AG04449 (cell line): ENCODE measurements at regions of chr17 and their contacts with region 1.

Region 1: DNA sequence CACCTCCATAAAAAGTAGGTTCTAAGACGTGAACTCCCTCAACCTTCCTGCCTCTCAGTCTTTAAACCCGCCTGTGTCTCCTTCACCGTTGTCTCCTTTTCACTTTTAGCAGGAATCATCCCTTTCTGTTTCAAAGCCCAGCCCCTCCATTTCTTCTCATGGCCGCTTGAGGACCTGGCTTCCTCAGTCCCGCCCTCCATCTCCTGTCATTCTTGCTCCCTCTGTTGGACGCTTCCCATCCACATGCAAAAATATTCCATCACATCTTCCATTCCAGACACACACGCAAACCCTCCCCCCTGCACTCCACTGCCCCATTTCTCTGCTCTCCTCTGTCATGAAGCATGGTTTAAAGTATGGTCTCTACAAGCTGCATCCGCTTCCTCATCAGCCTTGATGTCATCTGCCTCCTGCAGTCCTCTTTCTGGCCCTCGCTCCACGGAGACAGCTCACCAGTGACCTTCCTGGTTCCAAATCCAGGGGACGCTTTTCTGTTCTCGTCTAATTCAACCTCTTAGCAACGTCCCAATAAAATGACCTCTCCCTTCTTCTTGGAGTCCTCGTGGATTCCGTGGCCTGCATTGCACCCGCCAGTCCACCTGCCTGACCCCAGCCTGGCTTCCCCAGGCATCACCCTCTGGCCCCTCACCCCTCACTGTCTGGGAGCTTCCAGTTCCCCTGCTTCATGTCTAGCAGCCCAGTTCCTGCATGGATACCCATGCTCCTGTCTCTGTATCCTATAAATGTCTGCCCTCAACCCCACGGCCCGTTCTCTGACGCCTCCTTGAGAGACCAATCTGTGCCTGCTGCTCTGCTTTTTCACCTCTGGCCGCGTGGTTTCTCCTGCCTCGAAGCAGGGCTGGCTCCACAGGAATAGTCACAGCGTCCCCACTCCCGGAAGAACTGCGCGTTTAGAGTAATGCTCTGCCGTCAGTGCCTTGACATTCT is 26.2 kb downstream of the ANKRD40 start:
- DNase-seq: no peak
- H3K4me3 ChIP-seq: no peak overlapping the region
- CTCF ChIP-seq: peak; percentile 80

Region 2: DNA sequence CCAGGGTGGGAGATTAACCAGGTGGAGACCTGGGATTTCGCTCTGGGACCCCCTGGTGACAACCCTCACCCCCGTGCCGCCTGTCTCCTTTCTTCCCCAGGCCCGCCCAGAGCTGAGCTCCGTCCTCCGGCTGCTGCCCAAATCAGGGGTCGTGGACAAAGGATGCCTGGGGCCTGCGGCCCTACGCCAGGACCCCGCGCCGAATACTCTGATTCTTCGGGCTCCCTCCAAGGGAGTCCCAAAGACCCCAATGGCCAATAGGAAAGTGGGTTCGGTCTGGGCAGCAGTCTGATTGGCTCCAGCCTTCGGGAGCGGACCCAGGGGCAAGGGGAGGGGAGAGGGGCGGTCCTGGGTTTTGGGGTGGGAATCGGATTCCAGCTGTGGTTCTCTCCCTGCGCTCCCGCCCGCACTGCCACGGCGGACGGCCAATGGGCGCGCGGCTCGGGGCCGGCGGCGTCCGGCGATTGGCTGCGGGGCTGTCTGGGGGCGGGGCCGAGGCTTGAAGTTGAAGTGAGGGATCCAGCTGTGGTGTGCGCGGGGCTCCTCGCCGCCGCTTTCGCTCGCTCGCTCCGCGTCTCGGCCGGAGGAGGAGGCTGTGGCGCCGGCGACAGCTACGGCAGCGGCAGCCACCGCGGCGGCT is 121.2 kb before region 1 on chr17 and contains the start of gene CACNA1G:
- CTCF ChIA-PET with region 1: interaction called, 11 read pairs
- POLR2A ChIA-PET with region 1: no interaction called
- DNase-seq: no peak
- H3K4me3 ChIP-seq: peak within 1 kb of the TSS; percentile 49
- CTCF ChIP-seq: no peak

Region 3: GRCh38 chr17:50638851-50639767 is 42.4 kb before region 1 on chr17:
- CTCF ChIA-PET with region 1: interaction called, 11 read pairs
- POLR2A ChIA-PET with region 1: no interaction called
- DNase-seq: peak; percentile 87
- H3K4me3 ChIP-seq: no peak overlapping the region
- CTCF ChIP-seq: no peak

Region 4: GRCh38 chr17:50668025-50668837 is 13.3 kb before region 1 on chr17:
- CTCF ChIA-PET with region 1: interaction called, 23 read pairs
- POLR2A ChIA-PET with region 1: interaction called, 3 read pairs
- DNase-seq: no peak
- H3K4me3 ChIP-seq: peak overlapping the region; percentile 3
- CTCF ChIP-seq: no peak

Region 5: DNA sequence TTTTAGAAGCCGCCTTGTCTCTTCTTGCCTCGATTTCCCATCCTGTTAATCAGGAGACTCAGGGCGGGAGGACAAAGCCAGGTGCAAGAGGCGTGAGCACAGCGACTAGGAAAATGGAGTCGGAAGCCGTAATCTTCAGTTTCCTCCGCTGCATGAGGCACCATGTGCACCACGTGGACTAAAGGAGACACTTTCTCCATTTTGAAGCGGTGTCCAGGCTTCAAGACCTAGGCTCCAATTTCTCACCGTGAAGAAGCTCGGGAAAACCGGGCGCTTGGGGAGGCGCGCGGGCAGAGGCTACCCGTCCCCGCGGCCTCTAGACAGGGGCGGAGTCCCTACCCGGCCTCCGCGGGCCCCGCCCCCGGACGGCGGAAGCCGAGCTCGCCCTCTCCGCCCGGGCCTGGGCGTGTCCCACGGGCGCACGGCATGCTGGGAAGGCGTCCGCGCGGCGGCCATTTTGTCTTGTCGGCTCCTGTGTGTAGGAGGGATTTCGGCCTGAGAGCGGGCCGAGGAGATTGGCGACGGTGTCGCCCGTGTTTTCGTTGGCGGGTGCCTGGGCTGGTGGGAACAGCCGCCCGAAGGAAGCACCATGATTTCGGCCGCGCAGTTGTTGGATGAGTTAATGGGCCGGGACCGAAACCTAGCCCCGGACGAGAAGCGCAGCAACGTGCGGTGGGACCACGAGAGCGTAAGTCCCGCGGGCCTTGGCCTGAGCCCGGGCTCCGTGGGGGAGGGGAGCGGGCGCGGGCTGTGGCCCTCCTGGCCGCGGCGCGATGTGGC is 37.8 kb after region 1 on chr17 and contains the start of gene LUC7L3:
- CTCF ChIA-PET with region 1: no interaction called
- POLR2A ChIA-PET with region 1: no interaction called
- DNase-seq: peak; percentile 52
- H3K4me3 ChIP-seq: peak within 1 kb of the TSS; percentile 93
- CTCF ChIP-seq: no peak